Gastrocnemius medialis (tissue), 4 donors: ENCODE measurements at regions of chr1 and their contacts with region 1.

Region 1: DNA sequence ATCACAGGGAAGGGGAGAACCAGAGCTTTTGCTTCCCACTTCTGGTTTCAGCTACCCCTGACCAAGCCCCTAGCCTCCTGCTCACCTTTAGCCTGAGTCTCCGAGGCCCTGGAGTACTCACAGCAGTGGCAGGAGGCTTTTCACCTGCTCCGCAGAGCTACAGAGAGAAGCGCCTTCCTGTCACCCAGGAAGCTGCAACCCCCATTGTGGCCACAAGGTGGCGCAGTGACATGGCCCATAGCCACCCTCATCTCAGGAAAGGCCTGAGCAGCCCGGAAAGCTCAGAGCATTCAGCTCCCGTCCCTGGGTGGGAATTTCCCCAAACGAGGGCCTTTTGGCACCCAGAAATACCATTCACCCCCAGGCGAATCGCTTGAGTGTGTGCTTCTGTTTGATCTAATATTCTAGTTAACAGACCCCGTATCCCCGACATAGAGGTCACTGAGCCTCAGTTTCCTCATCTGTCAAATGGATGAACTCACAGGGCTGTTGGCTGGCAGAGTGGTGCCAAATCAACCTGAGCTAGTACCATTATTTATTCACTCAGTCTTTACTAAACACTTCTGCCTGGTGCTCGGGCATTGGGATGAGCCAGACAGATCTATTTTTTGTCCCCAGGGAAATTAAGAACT is 25.3 kb downstream of the A3GALT2 start:
- DNase-seq: peak; percentile 63 to 84
- ATAC-seq: peak; percentile 83 to 92
- H3K4me3 ChIP-seq: no peak overlapping the region
- H3K27ac ChIP-seq: peak overlapping the region; percentile 8 to 41 (median 20)
- H3K4me1 ChIP-seq: peaks cover 4 to 14% of the 10 kb centered on the region in 2 donors
- H3K27me3 ChIP-seq: no peaks in the 10 kb centered on the region
- CTCF ChIP-seq: peak; percentile 94 to 99 (median 98)
- POLR2A ChIP-seq: no peak

Region 2: GRCh38 chr1:33219881-33220661 is 75.5 kb before region 1 on chr1:
- in situ Hi-C with region 1: no loop called
- intact Hi-C with region 1: loop called (anchors 5 kb)
- DNase-seq: no peak
- ATAC-seq: no peak
- H3K4me3 ChIP-seq: no peak overlapping the region
- H3K27ac ChIP-seq: no peak overlapping the region
- H3K4me1 ChIP-seq: no peaks in the 10 kb centered on the region
- H3K27me3 ChIP-seq: no peaks in the 10 kb centered on the region
- CTCF ChIP-seq: no peak
- POLR2A ChIP-seq: no peak

Region 3: GRCh38 chr1:33443080-33443704 is 147.6 kb after region 1 on chr1:
- in situ Hi-C with region 1: no loop called
- intact Hi-C with region 1: no loop called
- DNase-seq: no peak
- ATAC-seq: no peak
- H3K4me3 ChIP-seq: no peak overlapping the region
- H3K27ac ChIP-seq: peak overlapping the region in 3 of 4 donors; percentile 55 to 76 (median 70)
- H3K4me1 ChIP-seq: peaks cover 12 to 14% of the 10 kb centered on the region in 2 donors
- H3K27me3 ChIP-seq: no peaks in the 10 kb centered on the region
- CTCF ChIP-seq: no peak
- POLR2A ChIP-seq: no peak

Region 4: DNA sequence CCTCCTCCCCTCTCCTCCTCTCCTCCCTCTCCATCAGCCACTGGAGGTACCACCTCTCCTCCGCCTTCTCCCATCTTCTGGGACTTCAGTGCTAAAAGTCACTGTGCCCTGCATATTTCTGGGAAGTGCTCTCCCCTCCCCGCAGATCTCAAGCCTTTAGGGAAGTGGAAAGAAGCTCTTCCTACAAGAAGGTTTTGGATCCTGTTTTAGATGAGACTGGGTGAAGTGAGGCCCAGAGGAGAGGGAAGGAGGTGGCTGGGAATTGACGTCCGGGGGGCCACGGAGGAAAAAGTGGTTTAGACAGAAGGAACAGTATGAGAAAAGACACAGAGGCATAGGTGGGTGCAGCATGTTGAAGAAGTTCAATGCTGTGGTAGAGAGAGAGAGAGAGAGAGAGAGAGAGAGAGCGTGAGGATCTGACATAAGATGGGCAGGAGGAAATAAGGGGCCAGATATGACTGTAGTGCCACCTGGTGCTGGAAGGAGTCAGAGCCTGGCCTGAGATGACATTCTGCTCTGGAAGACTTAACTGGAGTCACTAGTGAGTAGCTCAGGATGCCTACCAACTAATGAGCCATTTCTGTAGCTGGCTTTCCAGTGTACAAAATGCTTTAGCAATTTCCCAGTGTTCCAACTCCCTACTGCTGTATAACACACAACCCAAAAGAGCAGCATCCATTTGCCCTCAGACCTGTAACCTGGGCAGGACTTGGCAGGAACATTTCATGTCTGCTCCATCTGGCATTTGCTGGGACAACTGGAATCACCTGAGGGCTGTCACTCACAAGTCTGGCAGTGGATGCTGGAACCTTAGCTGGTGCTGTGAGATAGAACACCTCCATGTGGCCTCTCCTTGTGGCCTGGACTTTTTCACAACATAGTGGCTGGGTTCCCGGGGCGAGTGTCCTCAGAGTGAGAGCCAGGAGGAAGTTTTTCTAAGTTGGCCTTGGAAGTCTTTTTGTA is 160.3 kb after region 1 on chr1:
- in situ Hi-C with region 1: loop called in 3 of 4 experiments (anchors 10 kb)
- intact Hi-C with region 1: no loop called
- DNase-seq: peak; percentile 90 to 96
- ATAC-seq: peak; percentile 86 to 90
- H3K4me3 ChIP-seq: no peak overlapping the region
- H3K27ac ChIP-seq: peak overlapping the region; percentile 78 to 84 (median 80)
- H3K4me1 ChIP-seq: peaks cover 32 to 43% of the 10 kb centered on the region in 2 donors
- H3K27me3 ChIP-seq: no peaks in the 10 kb centered on the region
- CTCF ChIP-seq: peak; percentile 54 to 73 (median 68)
- POLR2A ChIP-seq: no peak

Region 5: DNA sequence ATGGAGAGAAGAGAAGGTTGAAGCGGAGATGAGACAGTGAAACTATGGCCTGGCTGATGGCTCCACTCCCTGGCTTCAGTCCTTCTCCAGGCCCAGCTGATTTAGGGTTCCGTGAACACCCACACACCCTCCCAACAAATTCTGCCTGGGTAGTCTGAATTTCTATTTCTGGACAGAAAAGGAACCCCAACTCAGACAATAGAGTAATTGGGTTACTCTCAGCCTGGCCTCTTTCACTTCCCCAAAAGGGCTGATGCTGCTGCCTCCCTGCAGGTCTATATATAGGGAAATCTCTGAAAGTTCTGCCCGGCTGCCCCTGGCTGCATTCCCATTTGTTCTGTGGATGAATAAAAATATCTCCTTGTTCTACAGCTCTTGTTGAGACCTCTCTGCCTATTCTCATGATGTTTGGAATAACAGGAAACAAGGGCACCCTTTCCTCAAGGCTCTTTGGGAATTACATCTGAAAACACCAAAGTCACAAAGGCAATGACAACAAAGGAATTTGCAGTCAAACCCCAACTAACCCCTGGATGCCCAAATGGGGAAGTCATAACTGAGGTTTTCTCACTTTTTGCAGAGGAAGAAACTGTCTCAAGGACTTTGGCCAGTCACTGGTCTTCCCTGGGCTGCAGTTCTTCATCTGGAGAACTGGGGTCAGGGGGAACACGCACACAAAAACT is 165.5 kb after region 1 on chr1:
- in situ Hi-C with region 1: loop called (anchors 5 to 10 kb)
- intact Hi-C with region 1: no loop called
- DNase-seq: peak; percentile 47 to 49
- ATAC-seq: peak in 1 of 2 donors; percentile 3
- H3K4me3 ChIP-seq: no peak overlapping the region
- H3K27ac ChIP-seq: peak overlapping the region; percentile 73 to 92 (median 84)
- H3K4me1 ChIP-seq: peaks cover 34 to 45% of the 10 kb centered on the region in 2 donors
- H3K27me3 ChIP-seq: no peaks in the 10 kb centered on the region
- CTCF ChIP-seq: no peak
- POLR2A ChIP-seq: no peak

Region 6: GRCh38 chr1:33466159-33466558 is 170.6 kb after region 1 on chr1:
- in situ Hi-C with region 1: loop called in 3 of 4 experiments (anchors 5 to 10 kb)
- intact Hi-C with region 1: loop called (anchors 1 kb)
- DNase-seq: peak in 1 of 2 donors; percentile 44
- ATAC-seq: peak; percentile 34 to 38
- H3K4me3 ChIP-seq: no peak overlapping the region
- H3K27ac ChIP-seq: peak overlapping the region in 2 of 4 donors; percentile 21 to 26
- H3K4me1 ChIP-seq: peaks cover 9 to 25% of the 10 kb centered on the region in 2 donors
- H3K27me3 ChIP-seq: no peaks in the 10 kb centered on the region
- CTCF ChIP-seq: no peak
- POLR2A ChIP-seq: no peak

Region 7: GRCh38 chr1:33610864-33611455 is 315.4 kb after region 1 on chr1:
- in situ Hi-C with region 1: no loop called
- intact Hi-C with region 1: loop called (anchors 5 kb)
- DNase-seq: no peak
- ATAC-seq: no peak
- H3K4me3 ChIP-seq: no peak overlapping the region
- H3K27ac ChIP-seq: no peak overlapping the region
- H3K4me1 ChIP-seq: no peaks in the 10 kb centered on the region
- H3K27me3 ChIP-seq: peaks cover 0 to 6% (median 0%) of the 10 kb centered on the region in 3 donors
- CTCF ChIP-seq: no peak
- POLR2A ChIP-seq: no peak

Region 8: DNA sequence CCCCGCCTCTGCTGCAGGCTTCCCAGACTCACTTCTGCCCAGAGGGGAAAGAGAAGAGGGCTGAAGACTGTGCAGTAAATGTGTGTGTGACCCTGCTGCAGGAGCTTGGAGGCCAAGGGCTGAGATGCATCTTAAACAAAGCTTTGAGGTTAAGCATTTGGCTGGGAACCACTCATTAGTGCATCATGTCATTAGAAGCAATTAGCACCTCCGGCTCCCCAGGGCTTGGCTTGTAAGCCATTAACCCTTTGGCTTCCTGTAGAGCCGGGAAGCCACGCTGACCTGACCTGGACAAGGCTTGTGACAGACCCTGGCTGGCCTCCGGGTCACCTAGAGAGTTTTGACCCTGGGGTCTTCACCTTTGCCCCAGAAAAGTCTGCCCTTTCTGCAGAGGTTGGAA is 792.4 kb after region 1 on chr1:
- in situ Hi-C with region 1: no loop called
- intact Hi-C with region 1: no loop called
- DNase-seq: no peak
- ATAC-seq: no peak
- H3K4me3 ChIP-seq: no peak overlapping the region
- H3K27ac ChIP-seq: no peak overlapping the region
- H3K4me1 ChIP-seq: no peaks in the 10 kb centered on the region
- H3K27me3 ChIP-seq: no peaks in the 10 kb centered on the region
- CTCF ChIP-seq: no peak
- POLR2A ChIP-seq: no peak